ENCODE measurements at regions of chr18 and their contacts with region 1.

Region 1: GRCh38 chr18:58541789-58542425 is 87.0 kb downstream of the ALPK2 start:
- DNase-seq: peak; percentile 57
- H3K4me3 Mint-ChIP-seq: peak overlapping the region; percentile 19
- H3K27ac Mint-ChIP-seq: peak overlapping the region; percentile 57
- H3K4me1 Mint-ChIP-seq: peaks cover 92% of the 10 kb centered on the region
- H3K27me3 Mint-ChIP-seq: peaks cover 4% of the 10 kb centered on the region

Region 2: DNA sequence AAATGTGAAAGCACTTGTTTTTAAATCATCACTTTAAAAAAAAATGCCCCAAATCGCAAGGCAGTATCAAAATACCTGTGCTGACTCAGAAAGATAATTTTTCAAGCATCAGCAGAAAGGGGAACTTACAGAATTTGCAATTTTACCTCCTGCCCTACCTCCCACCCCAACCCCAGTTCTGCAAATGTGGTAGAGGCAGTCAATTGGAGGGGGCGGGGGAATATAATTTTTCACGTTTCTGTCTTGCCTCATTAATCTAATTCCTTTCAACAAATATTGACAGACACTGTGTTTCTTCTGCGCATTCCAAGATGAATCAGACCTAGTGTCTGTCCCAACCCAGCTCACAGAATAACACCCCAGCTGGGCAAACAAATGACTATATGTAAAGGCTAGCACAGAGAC is 10.2 kb after region 1 on chr18:
- intact Hi-C with region 1: loop called (anchors 1 kb)
- DNase-seq: no peak
- H3K4me3 Mint-ChIP-seq: no peak overlapping the region
- H3K27ac Mint-ChIP-seq: no peak overlapping the region
- H3K4me1 Mint-ChIP-seq: peaks cover 22% of the 10 kb centered on the region
- H3K27me3 Mint-ChIP-seq: no peaks in the 10 kb centered on the region

Region 3: DNA sequence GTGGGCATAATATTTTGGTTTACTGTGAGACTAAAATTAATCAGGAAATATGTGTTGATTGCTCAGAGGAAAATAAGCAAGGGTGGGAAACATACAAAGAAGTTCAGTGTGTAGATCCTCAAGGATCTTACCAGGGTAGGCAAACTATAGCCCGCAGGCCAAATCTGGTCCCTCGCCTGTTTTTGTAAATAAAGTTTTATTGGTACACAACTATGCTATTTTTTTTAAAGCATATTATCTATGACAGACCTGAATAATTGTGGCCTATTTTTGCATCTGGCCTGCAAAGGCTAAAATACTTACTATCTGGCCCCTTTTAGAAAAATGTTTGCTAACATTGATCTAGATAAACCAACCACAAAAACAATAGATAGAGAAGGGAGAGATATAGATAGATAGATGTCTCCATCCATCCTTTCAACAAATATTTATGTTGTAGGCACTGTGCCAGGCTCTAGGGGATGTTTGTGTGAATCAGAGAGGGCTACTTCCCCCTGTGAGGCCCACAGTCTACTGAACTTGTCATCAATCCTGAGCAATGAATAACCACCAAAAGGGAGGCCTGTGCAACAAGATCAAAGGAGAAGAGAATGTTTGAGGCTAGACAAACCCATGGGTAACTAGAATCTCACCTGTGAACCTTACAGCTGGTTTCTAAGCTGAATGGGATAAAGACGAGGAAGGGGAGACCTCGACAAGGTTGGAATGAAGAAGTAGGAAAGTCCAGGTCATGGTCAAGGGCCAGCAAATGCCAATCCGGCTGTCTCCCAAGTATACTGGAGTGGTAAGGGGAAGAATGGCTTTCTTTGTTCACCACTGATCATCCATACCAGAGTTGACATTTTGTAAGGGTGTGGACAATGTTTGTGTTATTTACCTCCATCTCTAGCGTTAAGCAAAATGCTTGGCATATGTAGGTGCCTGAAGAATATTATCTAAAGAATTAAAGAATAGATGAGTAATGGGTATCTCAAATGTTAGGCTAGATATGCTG is 63.4 kb after region 1 on chr18:
- intact Hi-C with region 1: loop called (anchors 1 kb)
- DNase-seq: no peak
- H3K4me3 Mint-ChIP-seq: no peak overlapping the region
- H3K27ac Mint-ChIP-seq: peak overlapping the region; percentile 37
- H3K4me1 Mint-ChIP-seq: peaks cover 37% of the 10 kb centered on the region
- H3K27me3 Mint-ChIP-seq: peaks cover 4% of the 10 kb centered on the region

Region 4: GRCh38 chr18:58649966-58650816 is 108.3 kb after region 1 on chr18:
- intact Hi-C with region 1: loop called (anchors 1 kb)
- DNase-seq: peak; percentile 73
- H3K4me3 Mint-ChIP-seq: peak overlapping the region; percentile 6
- H3K27ac Mint-ChIP-seq: peak overlapping the region; percentile 69
- H3K4me1 Mint-ChIP-seq: peaks cover 65% of the 10 kb centered on the region
- H3K27me3 Mint-ChIP-seq: no peaks in the 10 kb centered on the region

Region 5: GRCh38 chr18:58687871-58688308 is 146.0 kb after region 1 on chr18:
- intact Hi-C with region 1: loop called (anchors 1 kb)
- DNase-seq: peak; percentile 68
- H3K4me3 Mint-ChIP-seq: peak overlapping the region; percentile 53
- H3K27ac Mint-ChIP-seq: peak overlapping the region; percentile 83
- H3K4me1 Mint-ChIP-seq: peaks cover 60% of the 10 kb centered on the region
- H3K27me3 Mint-ChIP-seq: no peaks in the 10 kb centered on the region

Region 6: GRCh38 chr18:59139371-59140298 is 597.7 kb after region 1 on chr18 and contains the start of gene SEC11C:
- intact Hi-C with region 1: loop called (anchors 5 kb)
- DNase-seq: peak; percentile 96
- H3K4me3 Mint-ChIP-seq: peak within 1 kb of the TSS; percentile 94
- H3K27ac Mint-ChIP-seq: peak within 1 kb of the TSS; percentile 98
- H3K4me1 Mint-ChIP-seq: peaks cover 34% of the 10 kb centered on the region
- H3K27me3 Mint-ChIP-seq: peaks cover 19% of the 10 kb centered on the region
- total RNA-seq, gene SEC11C: 147 and 148 TPM in 2 replicates

Region 7: GRCh38 chr18:59885579-59886163 is 1343.8 kb after region 1 on chr18:
- intact Hi-C with region 1: loop called (anchors 5 kb)
- DNase-seq: peak; percentile 38
- H3K4me3 Mint-ChIP-seq: peak overlapping the region; percentile 8
- H3K27ac Mint-ChIP-seq: peak overlapping the region; percentile 72
- H3K4me1 Mint-ChIP-seq: peaks cover 47% of the 10 kb centered on the region
- H3K27me3 Mint-ChIP-seq: no peaks in the 10 kb centered on the region